ENCODE measurements at regions of chr2 and their contacts with region 1.

Region 1: GRCh38 chr2:201171259-201171814 is 11.6 kb upstream of the CASP10 start:
- DNase-seq: no peak
- ATAC-seq: peak in 1 of 4 donors; percentile 13
- H3K4me3 ChIP-seq: no peak overlapping the region
- H3K27ac ChIP-seq: no peak overlapping the region
- H3K4me1 ChIP-seq: no peaks in the 10 kb centered on the region
- H3K27me3 ChIP-seq: no peaks in the 10 kb centered on the region
- CTCF ChIP-seq: no peak
- POLR2A ChIP-seq: no peak

Region 2: DNA sequence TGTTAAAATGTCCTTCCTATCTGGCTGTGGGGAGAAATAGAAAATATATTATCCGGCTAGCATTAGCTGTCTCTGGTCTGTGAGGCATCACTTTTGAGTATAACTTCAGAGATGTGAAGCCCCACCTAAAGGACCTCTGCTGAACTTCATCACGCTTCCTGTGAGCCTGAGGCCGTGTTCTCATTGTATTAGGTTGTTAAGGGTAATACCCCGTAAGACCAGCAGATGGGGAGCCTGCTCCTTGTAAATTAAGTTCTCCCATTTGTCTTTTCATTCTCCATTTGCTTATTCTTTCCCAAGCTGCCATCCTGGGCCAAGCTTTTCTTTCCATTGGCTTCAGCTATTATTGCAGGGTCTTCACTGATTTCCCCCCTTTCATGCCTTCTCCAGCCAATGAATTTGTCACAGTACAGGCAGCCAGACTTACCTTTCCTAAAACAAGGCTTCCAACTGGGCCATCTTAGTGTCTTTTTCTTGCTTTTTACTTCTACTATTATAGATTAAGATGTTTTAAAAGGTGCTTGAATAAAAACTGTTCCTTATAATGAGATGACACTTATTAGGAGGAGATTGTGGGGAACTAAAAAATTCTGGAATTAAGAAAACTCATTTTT is 269.8 kb before region 1 on chr2:
- intact Hi-C with region 1: loop called (anchors 5 to 10 kb)
- DNase-seq: peak in 2 of 3 donors; percentile 36 to 60
- ATAC-seq: peak; percentile 92 to 95 (median 94)
- H3K4me3 ChIP-seq: no peak overlapping the region
- H3K27ac ChIP-seq: no peak overlapping the region
- H3K4me1 ChIP-seq: peaks cover 0 to 3% (median 0%) of the 10 kb centered on the region in 4 donors
- H3K27me3 ChIP-seq: no peaks in the 10 kb centered on the region
- CTCF ChIP-seq: peak; percentile 65 to 77 (median 74)
- POLR2A ChIP-seq: no peak

Region 3: GRCh38 chr2:201057087-201057521 is 114.2 kb before region 1 on chr2:
- intact Hi-C with region 1: loop called in 1 of 2 experiments (anchors 10 kb)
- DNase-seq: no peak
- ATAC-seq: peak in 1 of 4 donors; percentile 7
- H3K4me3 ChIP-seq: no peak overlapping the region
- H3K27ac ChIP-seq: no peak overlapping the region
- H3K4me1 ChIP-seq: peaks cover 0 to 22% (median 5%) of the 10 kb centered on the region in 4 donors
- H3K27me3 ChIP-seq: no peaks in the 10 kb centered on the region
- CTCF ChIP-seq: no peak
- POLR2A ChIP-seq: no peak

Region 4: GRCh38 chr2:201071479-201072200 is 99.7 kb before region 1 on chr2 and contains the starts of genes HYCC2 and NDUFB3:
- intact Hi-C with region 1: loop called (anchors 5 to 10 kb)
- DNase-seq: peak; percentile 91 to 93 (median 93)
- ATAC-seq: peak; percentile 95 to 99 (median 96)
- H3K4me3 ChIP-seq: peak within 1 kb of the TSS; percentile 76 to 96 (median 91)
- H3K27ac ChIP-seq: peak within 1 kb of the TSS; percentile 81 to 92 (median 92)
- H3K4me1 ChIP-seq: peaks cover 0 to 26% (median 7%) of the 10 kb centered on the region in 4 donors
- H3K27me3 ChIP-seq: no peaks in the 10 kb centered on the region
- CTCF ChIP-seq: peak; percentile 26 to 41 (median 35)
- POLR2A ChIP-seq: peak; percentile 64
- total RNA-seq, gene HYCC2: 5.5 to 14.0 (median 10.3) TPM
- total RNA-seq, gene NDUFB3: 44.5 to 63.9 (median 48.7) TPM